CD8-positive, alpha-beta T cell (primary cell): ENCODE measurements at regions of chr6 and their contacts with region 1.

Region 1: GRCh38 chr6:108896111-108896661 is 48.0 kb downstream of the ARMC2 start:
- DNase-seq: peak in 2 of 9 experiments; percentile 75 to 86
- ATAC-seq: peak; percentile 79
- H3K4me3 ChIP-seq: no peak overlapping the region
- H3K4me3 Mint-ChIP-seq: peak overlapping the region; percentile 49
- H3K27ac ChIP-seq: peak overlapping the region in 1 of 2 experiments; percentile 73
- H3K27ac Mint-ChIP-seq: peak overlapping the region; percentile 83
- H3K4me1 ChIP-seq: peaks cover 14% of the 10 kb centered on the region
- H3K4me1 Mint-ChIP-seq: peaks cover 38% of the 10 kb centered on the region
- H3K27me3 ChIP-seq: no peaks in the 10 kb centered on the region
- H3K27me3 Mint-ChIP-seq: no peaks in the 10 kb centered on the region
- CTCF ChIP-seq: no peak

Region 2: GRCh38 chr6:108541838-108542759 is 354.1 kb before region 1 on chr6:
- CTCF ChIA-PET with region 1: interaction called, 29 read pairs
- POLR2A ChIA-PET with region 1: no interaction called
- intact Hi-C with region 1: loop called (anchors 1 kb)
- DNase-seq: peak; percentile 39 to 87 (median 69)
- ATAC-seq: peak; percentile 92
- H3K4me3 ChIP-seq: no peak overlapping the region
- H3K4me3 Mint-ChIP-seq: no peak overlapping the region
- H3K27ac ChIP-seq: no peak overlapping the region
- H3K27ac Mint-ChIP-seq: no peak overlapping the region
- H3K4me1 ChIP-seq: peaks cover 12% of the 10 kb centered on the region
- H3K4me1 Mint-ChIP-seq: peaks cover 16% of the 10 kb centered on the region
- H3K27me3 ChIP-seq: no peaks in the 10 kb centered on the region
- H3K27me3 Mint-ChIP-seq: no peaks in the 10 kb centered on the region
- CTCF ChIP-seq: peak; percentile 95

Region 3: DNA sequence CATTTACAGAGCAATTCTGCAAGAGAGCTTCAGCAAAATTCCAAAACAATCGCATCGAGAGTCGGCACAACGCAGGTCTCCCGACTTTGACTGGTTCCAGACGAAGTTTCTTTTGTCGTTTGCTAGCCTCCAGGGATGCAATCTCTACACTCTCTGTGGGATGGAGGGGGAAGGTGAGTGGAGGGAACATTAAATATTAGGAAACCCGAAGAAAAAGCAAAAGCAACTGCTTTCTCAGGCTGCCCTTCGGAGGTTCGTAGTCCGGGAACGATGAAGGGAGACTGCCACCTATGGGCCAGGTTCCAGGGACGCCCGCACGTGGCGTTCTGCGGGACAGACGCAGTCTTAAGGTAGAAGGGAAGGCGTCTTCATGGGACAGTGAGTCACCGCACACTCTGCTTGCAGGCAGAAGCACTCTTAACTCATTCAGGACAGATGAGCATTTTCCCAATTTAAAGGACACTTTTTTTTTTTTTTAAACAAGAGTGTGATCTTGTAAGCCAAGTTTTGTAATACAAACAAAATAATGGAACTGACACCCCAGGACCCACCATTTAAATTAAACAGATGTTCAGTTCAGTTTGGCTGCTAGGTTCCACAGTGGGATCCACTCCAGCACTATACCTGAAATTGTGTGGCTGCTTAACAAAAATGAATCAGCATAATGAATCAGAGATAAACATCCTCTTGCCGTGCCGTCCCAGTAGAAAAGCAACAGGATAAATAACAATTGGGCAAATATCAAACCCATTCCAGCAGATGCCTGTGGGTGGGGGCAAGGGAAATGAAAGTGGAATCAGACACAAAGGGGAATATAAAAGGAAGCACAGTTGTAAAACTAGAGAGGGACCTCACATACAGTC is 113.8 kb before region 1 on chr6:
- CTCF ChIA-PET with region 1: interaction called, 5 read pairs
- POLR2A ChIA-PET with region 1: no interaction called
- intact Hi-C with region 1: loop called in 1 of 2 experiments (anchors 1 kb)
- DNase-seq: peak; percentile 55 to 86 (median 78)
- ATAC-seq: peak; percentile 100
- H3K4me3 ChIP-seq: peak overlapping the region; percentile 56
- H3K4me3 Mint-ChIP-seq: peak overlapping the region; percentile 85
- H3K27ac ChIP-seq: no peak overlapping the region
- H3K27ac Mint-ChIP-seq: no peak overlapping the region
- H3K4me1 ChIP-seq: peaks cover 6% of the 10 kb centered on the region
- H3K4me1 Mint-ChIP-seq: peaks cover 8% of the 10 kb centered on the region
- H3K27me3 ChIP-seq: no peaks in the 10 kb centered on the region
- H3K27me3 Mint-ChIP-seq: no peaks in the 10 kb centered on the region
- CTCF ChIP-seq: peak; percentile 69

Region 4: GRCh38 chr6:108835218-108835850 is 60.9 kb before region 1 on chr6:
- CTCF ChIA-PET with region 1: interaction called, 3 read pairs
- POLR2A ChIA-PET with region 1: no interaction called
- intact Hi-C with region 1: loop called (anchors 2 to 5 kb)
- DNase-seq: peak; percentile 66 to 90 (median 85)
- ATAC-seq: peak; percentile 99
- H3K4me3 ChIP-seq: no peak overlapping the region
- H3K4me3 Mint-ChIP-seq: no peak overlapping the region
- H3K27ac ChIP-seq: no peak overlapping the region
- H3K27ac Mint-ChIP-seq: no peak overlapping the region
- H3K4me1 ChIP-seq: peaks cover 14% of the 10 kb centered on the region
- H3K4me1 Mint-ChIP-seq: peaks cover 23% of the 10 kb centered on the region
- H3K27me3 ChIP-seq: no peaks in the 10 kb centered on the region
- H3K27me3 Mint-ChIP-seq: no peaks in the 10 kb centered on the region
- CTCF ChIP-seq: peak; percentile 89

Region 5: GRCh38 chr6:108848116-108848868 is 47.9 kb before region 1 on chr6 and contains the start of gene ARMC2:
- CTCF ChIA-PET with region 1: no interaction called
- POLR2A ChIA-PET with region 1: no interaction called
- intact Hi-C with region 1: loop called in 1 of 2 experiments (anchors 5 kb)
- DNase-seq: peak; percentile 65 to 94 (median 85)
- ATAC-seq: peak; percentile 88
- H3K4me3 ChIP-seq: peak within 1 kb of the TSS; percentile 63 to 80
- H3K4me3 Mint-ChIP-seq: peak within 1 kb of the TSS; percentile 88
- H3K27ac ChIP-seq: peak within 1 kb of the TSS; percentile 67 to 73
- H3K27ac Mint-ChIP-seq: peak within 1 kb of the TSS; percentile 66
- H3K4me1 ChIP-seq: peaks cover 11% of the 10 kb centered on the region
- H3K4me1 Mint-ChIP-seq: peaks cover 29% of the 10 kb centered on the region
- H3K27me3 ChIP-seq: no peaks in the 10 kb centered on the region
- H3K27me3 Mint-ChIP-seq: no peaks in the 10 kb centered on the region
- CTCF ChIP-seq: no peak
- total RNA-seq, gene ARMC2: 4.2 to 6.1 TPM

Region 6: GRCh38 chr6:108874470-108875160 is 21.6 kb before region 1 on chr6:
- CTCF ChIA-PET with region 1: interaction called, 11 read pairs
- POLR2A ChIA-PET with region 1: no interaction called
- intact Hi-C with region 1: loop called in 1 of 2 experiments (anchors 2 kb)
- DNase-seq: peak in 6 of 9 experiments; percentile 9 to 60 (median 34)
- ATAC-seq: peak; percentile 45
- H3K4me3 ChIP-seq: peak overlapping the region in 1 of 2 experiments; percentile 31
- H3K4me3 Mint-ChIP-seq: peak overlapping the region; percentile 15
- H3K27ac ChIP-seq: peak overlapping the region; percentile 13 to 79
- H3K27ac Mint-ChIP-seq: peak overlapping the region; percentile 85
- H3K4me1 ChIP-seq: peaks cover 35% of the 10 kb centered on the region
- H3K4me1 Mint-ChIP-seq: peaks cover 46% of the 10 kb centered on the region
- H3K27me3 ChIP-seq: no peaks in the 10 kb centered on the region
- H3K27me3 Mint-ChIP-seq: no peaks in the 10 kb centered on the region
- CTCF ChIP-seq: no peak